ENCODE measurements at regions of chr19 and their contacts with region 1.

Region 1: GRCh38 chr19:58326914-58327726 is at the start of gene ZSCAN22:
- H3K4me3 Mint-ChIP-seq: no peak within 1 kb of the TSS
- H3K27ac Mint-ChIP-seq: no peak within 1 kb of the TSS
- H3K4me1 Mint-ChIP-seq: peaks cover 8% of the 10 kb centered on the region
- H3K27me3 Mint-ChIP-seq: no peaks in the 10 kb centered on the region

Region 2: DNA sequence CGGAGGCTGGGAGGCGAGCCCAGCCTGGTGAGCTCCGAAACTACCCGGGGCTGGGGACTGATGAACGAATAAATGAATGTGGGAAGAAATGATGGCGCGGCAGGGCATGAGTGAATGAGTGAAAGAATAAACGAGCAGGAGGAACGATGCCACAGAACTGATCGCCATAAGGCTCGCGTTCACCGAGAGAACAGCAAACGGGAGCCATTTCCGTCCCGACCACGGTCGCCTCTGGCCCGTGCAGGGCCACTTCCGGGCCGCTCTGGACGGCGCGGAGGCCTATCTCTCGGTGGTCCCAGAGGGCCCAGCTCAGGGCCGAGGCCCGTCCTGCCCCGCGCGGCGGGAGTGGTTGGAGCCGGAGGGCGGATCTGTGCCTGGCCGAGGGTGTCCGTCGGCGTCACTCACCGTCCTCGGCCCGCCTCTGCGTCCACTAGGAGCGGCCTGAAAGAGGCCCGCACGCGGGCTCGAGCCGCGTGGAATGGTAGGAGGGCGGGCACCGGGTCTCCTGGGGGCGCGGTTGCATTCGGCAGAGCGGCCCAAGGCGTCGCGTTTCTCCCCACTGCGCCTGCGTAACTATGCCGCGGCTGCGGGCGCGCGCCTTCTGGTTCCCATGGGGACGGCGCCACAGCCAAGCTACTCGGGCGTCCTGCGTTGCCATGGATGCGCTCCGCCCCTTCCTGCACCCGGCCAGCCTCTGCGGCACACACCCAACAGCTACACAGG is 35.3 kb after region 1 on chr19 and contains the start of gene ZNF497:
- intact Hi-C with region 1: loop called (anchors 1 kb)
- H3K4me3 Mint-ChIP-seq: peak within 1 kb of the TSS; percentile 96
- H3K27ac Mint-ChIP-seq: peak within 1 kb of the TSS; percentile 98
- H3K4me1 Mint-ChIP-seq: peaks cover 24% of the 10 kb centered on the region
- H3K27me3 Mint-ChIP-seq: peaks cover 12% of the 10 kb centered on the region

Region 3: GRCh38 chr19:58475714-58476497 is 148.8 kb after region 1 on chr19 and contains the start of gene ZNF446:
- intact Hi-C with region 1: loop called (anchors 5 kb)
- H3K4me3 Mint-ChIP-seq: peak within 1 kb of the TSS; percentile 92
- H3K27ac Mint-ChIP-seq: peak within 1 kb of the TSS; percentile 97
- H3K4me1 Mint-ChIP-seq: peaks cover 26% of the 10 kb centered on the region
- H3K27me3 Mint-ChIP-seq: no peaks in the 10 kb centered on the region

Measured in dendritic cell treated with granulocyte-macrophage colony-stimulating factor and Interleukin-4, amounts not matched to agents 40 ng/mL and 50 ng/mL, for 4 days (primary cell).